Naive thymus-derived CD4-positive, alpha-beta T cell (primary cell): ENCODE measurements at regions of chr13 and their contacts with region 1.

Region 1: DNA sequence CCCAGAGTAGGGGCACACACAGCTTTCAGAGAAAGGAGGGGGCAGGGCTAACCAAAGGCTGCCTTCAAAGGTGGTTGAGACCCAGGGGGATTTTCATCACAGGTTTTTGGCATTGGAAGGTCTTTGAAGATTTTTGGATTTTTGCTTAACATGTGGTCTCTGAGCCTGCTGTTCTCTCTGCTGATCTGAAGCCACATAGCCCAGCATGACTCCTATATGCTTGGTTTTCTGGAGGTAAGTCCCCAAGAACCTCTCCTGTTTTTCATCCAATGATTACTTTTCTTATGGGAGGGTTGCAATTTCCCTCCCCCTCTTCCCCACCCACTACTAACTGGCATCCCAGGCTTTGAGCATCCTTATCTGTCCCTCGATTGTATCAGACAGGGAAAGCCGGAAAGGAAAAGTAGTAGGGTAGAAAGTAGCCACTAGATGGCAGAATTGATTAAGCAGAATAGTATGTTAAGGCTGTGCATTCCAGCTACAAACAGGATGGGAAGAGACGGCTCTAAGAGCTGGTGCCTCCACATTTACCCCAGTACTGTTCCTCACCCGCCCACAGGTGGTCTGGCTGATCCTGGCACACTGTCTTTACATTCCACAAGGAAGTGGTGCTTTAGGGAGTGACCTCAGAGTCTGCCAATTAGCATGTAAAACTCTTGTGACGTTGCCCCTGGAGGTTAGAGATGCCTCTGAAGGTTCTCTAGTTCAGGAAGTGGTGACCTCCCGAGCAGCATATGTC is 218.9 kb upstream of the EDNRB start:
- DNase-seq: peak in 7 of 9 donors; percentile 7 to 41 (median 28)
- ATAC-seq: peak; percentile 76
- H3K4me3 ChIP-seq: no peak overlapping the region
- H3K4me3 Mint-ChIP-seq: peak overlapping the region in 9 of 10 donors; percentile 11 to 67 (median 42)
- H3K27ac ChIP-seq: no peak overlapping the region
- H3K27ac Mint-ChIP-seq: no peak overlapping the region
- H3K4me1 ChIP-seq: no peaks in the 10 kb centered on the region
- H3K4me1 Mint-ChIP-seq: peaks cover 3 to 7% (median 6%) of the 10 kb centered on the region in 7 donors
- H3K27me3 ChIP-seq: no peaks in the 10 kb centered on the region
- H3K27me3 Mint-ChIP-seq: peaks cover 0 to 4% (median 0%) of the 10 kb centered on the region in 5 donors

Region 2: DNA sequence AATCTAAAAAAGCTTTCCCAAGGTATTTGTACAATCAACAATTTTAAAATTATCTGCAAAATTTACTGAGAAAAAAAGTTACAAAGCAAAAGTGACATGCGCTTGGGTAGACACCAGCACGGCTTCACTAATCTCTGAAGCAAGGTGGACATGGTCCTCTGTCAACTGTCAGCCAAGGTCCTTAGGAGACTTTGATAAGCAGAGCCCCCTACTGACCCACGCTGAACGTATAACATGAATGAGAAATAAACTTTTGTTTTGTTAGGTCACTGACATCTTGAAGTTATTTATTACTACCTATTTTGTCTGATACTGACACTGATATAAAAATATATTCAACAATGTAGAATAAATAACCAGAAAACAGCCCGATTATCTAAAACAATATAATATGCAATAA is 622.1 kb after region 1 on chr13:
- CTCF ChIA-PET with region 1: no interaction called
- POLR2A ChIA-PET with region 1: no interaction called
- intact Hi-C with region 1: loop called in 1 of 2 experiments (anchors 5 kb)
- DNase-seq: no peak
- ATAC-seq: no peak
- H3K4me3 ChIP-seq: no peak overlapping the region
- H3K4me3 Mint-ChIP-seq: no peak overlapping the region
- H3K27ac ChIP-seq: no peak overlapping the region
- H3K27ac Mint-ChIP-seq: no peak overlapping the region
- H3K4me1 ChIP-seq: no peaks in the 10 kb centered on the region
- H3K4me1 Mint-ChIP-seq: no peaks in the 10 kb centered on the region
- H3K27me3 ChIP-seq: no peaks in the 10 kb centered on the region
- H3K27me3 Mint-ChIP-seq: peaks cover 0 to 35% (median 6%) of the 10 kb centered on the region in 5 donors